Calu3 (cell line): ENCODE measurements at regions of chr7 and their contacts with region 1.

Region 1: GRCh38 chr7:17599733-17600685 is 301.6 kb downstream of the AHR start:
- DNase-seq: peak; percentile 68
- H3K4me3 Mint-ChIP-seq: peak overlapping the region; percentile 22
- H3K27ac Mint-ChIP-seq: peak overlapping the region; percentile 96
- H3K4me1 Mint-ChIP-seq: peaks cover 73% of the 10 kb centered on the region
- H3K27me3 Mint-ChIP-seq: no peaks in the 10 kb centered on the region
- CTCF ChIP-seq: no peak

Region 2: GRCh38 chr7:17530741-17531417 is 69.1 kb before region 1 on chr7:
- CTCF ChIA-PET with region 1: no interaction called
- intact Hi-C with region 1: loop called (anchors 1 kb)
- DNase-seq: no peak
- H3K4me3 Mint-ChIP-seq: no peak overlapping the region
- H3K27ac Mint-ChIP-seq: peak overlapping the region; percentile 86
- H3K4me1 Mint-ChIP-seq: peaks cover 66% of the 10 kb centered on the region
- H3K27me3 Mint-ChIP-seq: no peaks in the 10 kb centered on the region
- CTCF ChIP-seq: peak; percentile 41

Region 3: GRCh38 chr7:17663061-17663675 is 63.2 kb after region 1 on chr7:
- CTCF ChIA-PET with region 1: no interaction called
- intact Hi-C with region 1: no loop called
- DNase-seq: peak; percentile 27
- H3K4me3 Mint-ChIP-seq: no peak overlapping the region
- H3K27ac Mint-ChIP-seq: no peak overlapping the region
- H3K4me1 Mint-ChIP-seq: peaks cover 22% of the 10 kb centered on the region
- H3K27me3 Mint-ChIP-seq: no peaks in the 10 kb centered on the region
- CTCF ChIP-seq: no peak

Region 4: DNA sequence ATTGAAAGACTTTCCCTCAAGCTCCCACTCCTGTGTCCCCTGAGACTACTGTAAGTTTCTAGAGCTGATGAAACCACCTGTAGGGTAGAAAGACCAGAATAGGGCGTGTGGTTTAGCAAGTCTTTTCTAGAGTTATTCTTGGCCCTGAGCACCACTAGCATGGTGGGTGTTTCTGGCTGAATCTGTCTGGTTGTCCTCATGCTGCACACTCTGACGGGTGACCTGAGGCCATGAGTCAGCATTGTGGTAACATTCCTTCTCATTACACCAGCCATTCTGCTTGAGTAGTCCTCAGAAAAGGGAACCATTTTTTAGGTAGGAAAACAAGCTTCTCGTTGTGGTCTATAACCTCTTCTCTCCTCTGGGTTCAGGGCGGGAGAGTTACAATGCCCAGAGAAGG is 90.0 kb after region 1 on chr7:
- CTCF ChIA-PET with region 1: no interaction called
- intact Hi-C with region 1: no loop called
- DNase-seq: peak; percentile 35
- H3K4me3 Mint-ChIP-seq: no peak overlapping the region
- H3K27ac Mint-ChIP-seq: peak overlapping the region; percentile 25
- H3K4me1 Mint-ChIP-seq: peaks cover 15% of the 10 kb centered on the region
- H3K27me3 Mint-ChIP-seq: no peaks in the 10 kb centered on the region
- CTCF ChIP-seq: no peak

Region 5: GRCh38 chr7:18076461-18076860 is 476.5 kb after region 1 on chr7:
- CTCF ChIA-PET with region 1: no interaction called
- intact Hi-C with region 1: no loop called
- DNase-seq: no peak
- H3K4me3 Mint-ChIP-seq: no peak overlapping the region
- H3K27ac Mint-ChIP-seq: no peak overlapping the region
- H3K4me1 Mint-ChIP-seq: no peaks in the 10 kb centered on the region
- H3K27me3 Mint-ChIP-seq: no peaks in the 10 kb centered on the region
- CTCF ChIP-seq: no peak